Common myeloid progenitor, CD34-positive (primary cell): ENCODE measurements at regions of chr14 and their contacts with region 1.

Region 1: DNA sequence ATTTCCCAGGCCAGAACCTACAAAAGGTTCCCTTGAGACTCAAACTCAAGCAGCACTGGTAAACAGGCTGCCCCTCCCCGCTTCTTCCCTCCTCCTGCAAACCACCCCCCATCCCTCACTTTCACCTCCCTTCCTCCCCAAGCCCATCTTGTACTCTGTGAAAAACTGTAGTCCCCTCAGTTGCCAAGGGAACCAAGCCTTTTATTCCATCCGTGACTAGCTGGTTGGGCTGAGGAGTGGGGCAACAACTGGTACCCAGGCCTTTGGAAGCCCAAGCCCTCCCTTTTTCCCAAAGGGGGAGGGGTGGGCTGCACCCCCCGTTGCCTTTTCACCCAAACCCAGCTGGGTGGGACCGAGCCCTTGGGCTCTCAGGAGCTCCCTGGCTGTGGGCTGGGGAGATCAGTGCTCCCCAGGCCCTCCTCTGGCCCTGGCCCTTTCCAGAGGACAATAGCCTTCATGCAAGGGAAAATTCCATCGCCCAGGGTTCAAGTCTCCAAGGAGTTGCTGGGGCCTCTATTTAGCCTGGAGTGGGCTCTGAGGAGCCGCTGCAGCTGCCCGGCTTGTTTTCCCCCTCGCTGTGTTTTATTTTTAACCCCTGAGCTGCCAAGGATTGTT is 61.9 kb downstream of the ZFP36L1 start:
- DNase-seq: no peak
- H3K4me3 ChIP-seq: no peak overlapping the region
- H3K27ac ChIP-seq: no peak overlapping the region
- H3K4me1 ChIP-seq: peaks cover 15 to 39% (median 26%) of the 10 kb centered on the region in 4 experiments
- H3K27me3 ChIP-seq: no peaks in the 10 kb centered on the region

Region 2: GRCh38 chr14:68703093-68703492 is 27.8 kb before region 1 on chr14:
- CTCF ChIA-PET with region 1: no interaction called
- POLR2A ChIA-PET with region 1: no interaction called
- DNase-seq: no peak
- H3K4me3 ChIP-seq: no peak overlapping the region
- H3K27ac ChIP-seq: no peak overlapping the region
- H3K4me1 ChIP-seq: peaks cover 0 to 3% (median 0%) of the 10 kb centered on the region in 4 experiments
- H3K27me3 ChIP-seq: no peaks in the 10 kb centered on the region

Region 3: GRCh38 chr14:68719634-68720384 is 11.1 kb before region 1 on chr14:
- CTCF ChIA-PET with region 1: interaction called, 21 read pairs
- POLR2A ChIA-PET with region 1: interaction called, 3 read pairs
- DNase-seq: peak; percentile 79 to 94 (median 90)
- H3K4me3 ChIP-seq: no peak overlapping the region
- H3K27ac ChIP-seq: no peak overlapping the region
- H3K4me1 ChIP-seq: peaks cover 0 to 6% (median 0%) of the 10 kb centered on the region in 4 experiments
- H3K27me3 ChIP-seq: no peaks in the 10 kb centered on the region

Region 4: DNA sequence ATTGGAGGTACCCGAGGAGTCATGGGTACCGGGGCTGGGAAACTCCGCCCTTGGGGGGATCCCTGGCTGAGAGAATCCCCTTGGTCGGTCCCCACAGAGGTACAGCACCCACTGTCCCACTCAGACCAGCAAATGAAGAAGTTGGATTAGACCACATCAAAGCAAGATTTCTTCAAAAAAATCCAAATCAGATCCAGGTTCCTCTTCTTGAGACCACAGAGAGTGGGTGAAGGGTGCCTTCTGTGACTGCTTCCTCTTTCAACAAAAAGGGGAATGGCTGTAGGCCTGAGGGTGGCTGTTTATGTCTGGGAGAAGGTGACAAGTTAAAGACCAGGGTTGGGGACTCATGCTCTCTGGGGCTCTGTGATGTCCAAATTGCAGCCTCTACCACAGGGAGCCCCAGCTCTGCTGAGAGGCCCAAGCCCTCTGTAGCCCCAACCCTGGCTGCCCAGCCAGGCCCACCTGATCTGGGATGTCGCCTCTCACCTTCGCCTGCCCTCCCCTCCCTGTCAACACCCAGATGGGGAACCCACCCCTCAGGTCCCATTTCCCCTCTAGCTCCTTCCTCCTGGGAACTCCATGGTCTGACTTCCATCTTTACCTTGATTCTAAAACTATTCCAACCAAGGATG is 11.0 kb after region 1 on chr14:
- CTCF ChIA-PET with region 1: no interaction called
- POLR2A ChIA-PET with region 1: no interaction called
- DNase-seq: peak; percentile 90 to 98 (median 98)
- H3K4me3 ChIP-seq: no peak overlapping the region
- H3K27ac ChIP-seq: no peak overlapping the region
- H3K4me1 ChIP-seq: peaks cover 0 to 9% (median 5%) of the 10 kb centered on the region in 4 experiments
- H3K27me3 ChIP-seq: peaks cover 0 to 72% (median 47%) of the 10 kb centered on the region in 5 experiments

Region 5: DNA sequence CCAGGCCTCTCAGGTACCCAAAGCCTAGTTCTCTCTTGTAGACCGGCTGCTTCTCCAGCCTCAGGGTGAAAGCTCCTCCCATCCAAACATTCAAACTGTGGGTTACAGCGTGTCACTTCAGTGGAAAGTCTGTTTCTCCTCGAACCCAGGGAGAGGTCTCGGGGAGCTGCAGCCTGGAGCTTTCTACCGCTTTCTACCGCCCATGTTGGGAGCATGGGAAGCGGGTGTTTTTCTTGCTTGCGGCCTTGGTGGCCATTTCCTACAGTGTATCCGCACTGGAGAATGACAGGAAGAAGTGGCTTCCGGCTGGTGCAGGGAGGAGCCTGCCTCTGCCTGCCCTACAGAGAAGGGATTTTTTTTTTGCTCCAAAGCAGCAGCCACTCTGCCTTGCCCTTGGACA is 40.7 kb after region 1 on chr14:
- CTCF ChIA-PET with region 1: no interaction called
- POLR2A ChIA-PET with region 1: no interaction called
- DNase-seq: peak; percentile 56 to 76 (median 70)
- H3K4me3 ChIP-seq: peak overlapping the region in 2 of 7 experiments; percentile 41 to 56
- H3K27ac ChIP-seq: no peak overlapping the region
- H3K4me1 ChIP-seq: peaks cover 8 to 38% (median 30%) of the 10 kb centered on the region in 4 experiments
- H3K27me3 ChIP-seq: no peaks in the 10 kb centered on the region

Region 6: GRCh38 chr14:69475194-69475818 is 744.4 kb after region 1 on chr14:
- CTCF ChIA-PET with region 1: no interaction called
- POLR2A ChIA-PET with region 1: no interaction called
- DNase-seq: peak; percentile 61 to 74 (median 71)
- H3K4me3 ChIP-seq: no peak overlapping the region
- H3K27ac ChIP-seq: no peak overlapping the region
- H3K4me1 ChIP-seq: no peaks in the 10 kb centered on the region
- H3K27me3 ChIP-seq: peaks cover 0 to 4% (median under 1%) of the 10 kb centered on the region in 5 experiments